Breast epithelium (tissue), 4 donors: ENCODE measurements at regions of chr1 and their contacts with region 1.

Region 1: GRCh38 chr1:193676996-193677569 is 490.7 kb upstream of the B3GALT2 start:
- DNase-seq: no peak
- H3K4me3 ChIP-seq: no peak overlapping the region
- H3K27ac ChIP-seq: no peak overlapping the region
- H3K4me1 ChIP-seq: no peaks in the 10 kb centered on the region
- H3K27me3 ChIP-seq: no peaks in the 10 kb centered on the region
- CTCF ChIP-seq: no peak
- POLR2A ChIP-seq: no peak

Region 2: DNA sequence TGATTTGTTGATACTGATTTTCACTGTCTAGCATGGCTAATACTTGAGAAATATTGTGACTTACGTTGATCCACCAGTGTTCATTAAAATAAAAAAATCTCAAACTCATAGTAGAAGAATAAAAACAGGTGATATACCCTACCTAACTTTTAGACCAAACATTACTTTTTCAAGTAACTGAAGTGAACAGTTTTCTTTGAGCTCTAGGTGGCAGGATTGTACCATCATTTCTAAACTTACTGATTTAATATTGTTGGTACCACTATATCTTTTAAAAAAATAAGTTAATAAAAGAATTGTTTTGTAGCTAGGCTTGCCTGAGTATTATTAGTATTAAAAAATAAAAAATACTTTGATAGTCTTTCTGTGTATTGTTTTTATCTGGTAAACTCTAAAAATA is 533.8 kb before region 1 on chr1:
- intact Hi-C with region 1: no loop called
- DNase-seq: no peak
- H3K4me3 ChIP-seq: no peak overlapping the region
- H3K27ac ChIP-seq: no peak overlapping the region
- H3K4me1 ChIP-seq: no peaks in the 10 kb centered on the region
- H3K27me3 ChIP-seq: no peaks in the 10 kb centered on the region
- CTCF ChIP-seq: no peak
- POLR2A ChIP-seq: no peak

Region 3: GRCh38 chr1:193264313-193265065 is 412.6 kb before region 1 on chr1:
- intact Hi-C with region 1: loop called (anchors 5 kb)
- DNase-seq: no peak
- H3K4me3 ChIP-seq: no peak overlapping the region
- H3K27ac ChIP-seq: no peak overlapping the region
- H3K4me1 ChIP-seq: no peaks in the 10 kb centered on the region
- H3K27me3 ChIP-seq: no peaks in the 10 kb centered on the region
- CTCF ChIP-seq: no peak
- POLR2A ChIP-seq: no peak

Region 4: GRCh38 chr1:193438771-193439170 is 238.3 kb before region 1 on chr1:
- intact Hi-C with region 1: no loop called
- DNase-seq: no peak
- H3K4me3 ChIP-seq: no peak overlapping the region
- H3K27ac ChIP-seq: no peak overlapping the region
- H3K4me1 ChIP-seq: no peaks in the 10 kb centered on the region
- H3K27me3 ChIP-seq: no peaks in the 10 kb centered on the region
- CTCF ChIP-seq: no peak
- POLR2A ChIP-seq: no peak